BJ (cell line): ENCODE measurements at regions of chr3 and their contacts with region 1.

Region 1: GRCh38 chr3:150495563-150496168 is 50.6 kb downstream of the SERP1 start:
- DNase-seq: no peak
- H3K4me3 ChIP-seq: no peak overlapping the region
- H3K27me3 ChIP-seq: no peaks in the 10 kb centered on the region
- CTCF ChIP-seq: peak; percentile 57

Region 2: DNA sequence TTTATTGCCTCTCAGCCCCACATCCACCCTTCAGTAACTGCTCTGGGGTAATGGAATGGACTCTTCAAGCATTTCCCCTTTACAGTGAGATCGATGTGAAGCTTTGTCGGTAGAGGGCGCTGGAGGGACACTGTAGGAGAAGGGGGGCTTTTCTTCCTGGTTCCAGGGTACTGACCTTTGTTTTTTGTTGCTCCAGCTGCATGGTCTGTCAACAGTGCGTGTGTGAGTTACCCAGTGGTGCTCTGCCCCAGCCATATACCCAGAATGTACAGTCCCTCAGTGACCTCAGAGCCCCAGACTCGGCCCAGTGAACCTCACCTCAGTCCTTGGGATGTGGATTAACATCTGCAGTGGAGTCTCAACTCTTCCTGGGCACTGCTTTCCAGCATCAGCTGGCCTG is 267.8 kb before region 1 on chr3:
- CTCF ChIA-PET with region 1: interaction called, 64 read pairs
- POLR2A ChIA-PET with region 1: no interaction called
- DNase-seq: no peak
- H3K4me3 ChIP-seq: no peak overlapping the region
- H3K27me3 ChIP-seq: no peaks in the 10 kb centered on the region
- CTCF ChIP-seq: peak; percentile 86

Region 3: GRCh38 chr3:150480877-150481276 is 14.8 kb before region 1 on chr3:
- CTCF ChIA-PET with region 1: interaction called, 13 read pairs
- POLR2A ChIA-PET with region 1: no interaction called
- DNase-seq: no peak
- H3K4me3 ChIP-seq: no peak overlapping the region
- H3K27me3 ChIP-seq: no peaks in the 10 kb centered on the region
- CTCF ChIP-seq: no peak

Region 4: GRCh38 chr3:150557725-150558124 is 62.1 kb after region 1 on chr3:
- CTCF ChIA-PET with region 1: no interaction called
- POLR2A ChIA-PET with region 1: no interaction called
- DNase-seq: no peak
- H3K4me3 ChIP-seq: no peak overlapping the region
- H3K27me3 ChIP-seq: no peaks in the 10 kb centered on the region
- CTCF ChIP-seq: no peak

Region 5: DNA sequence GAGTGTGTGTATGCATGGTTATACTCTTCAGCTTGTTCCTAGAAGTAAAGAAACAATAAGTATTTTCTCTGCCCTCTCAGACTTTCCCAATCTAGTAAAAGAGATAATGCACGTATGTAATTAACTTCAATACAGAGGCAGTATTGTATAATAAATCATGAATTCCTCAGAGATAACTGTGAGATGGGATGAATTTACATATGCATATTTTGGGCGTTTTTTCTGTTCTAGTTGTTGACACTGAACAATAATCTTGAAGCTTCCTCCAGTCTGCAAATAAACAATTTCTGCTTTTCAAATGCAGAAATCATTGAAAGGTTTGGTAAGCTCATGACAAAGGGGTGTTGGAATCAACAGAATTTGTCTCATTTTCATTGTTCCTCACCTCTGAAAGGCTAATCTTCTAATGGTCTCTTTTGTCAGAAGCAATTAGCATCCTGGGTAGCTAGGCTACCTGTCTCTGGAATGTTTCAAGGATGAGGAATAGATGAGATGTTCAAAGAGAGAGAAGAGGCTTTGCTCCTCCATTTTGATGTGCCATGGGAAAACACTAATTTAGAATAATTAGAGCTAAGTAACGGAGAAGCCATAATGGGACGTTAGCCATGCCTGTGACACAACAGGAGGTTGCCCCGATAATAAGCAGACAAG is 310.6 kb after region 1 on chr3:
- CTCF ChIA-PET with region 1: no interaction called
- POLR2A ChIA-PET with region 1: no interaction called
- DNase-seq: no peak
- H3K4me3 ChIP-seq: no peak overlapping the region
- H3K27me3 ChIP-seq: peaks cover 5% of the 10 kb centered on the region
- CTCF ChIP-seq: no peak